GM13976 (cell line): ENCODE measurements at regions of chr3 and their contacts with region 1.

Region 1: DNA sequence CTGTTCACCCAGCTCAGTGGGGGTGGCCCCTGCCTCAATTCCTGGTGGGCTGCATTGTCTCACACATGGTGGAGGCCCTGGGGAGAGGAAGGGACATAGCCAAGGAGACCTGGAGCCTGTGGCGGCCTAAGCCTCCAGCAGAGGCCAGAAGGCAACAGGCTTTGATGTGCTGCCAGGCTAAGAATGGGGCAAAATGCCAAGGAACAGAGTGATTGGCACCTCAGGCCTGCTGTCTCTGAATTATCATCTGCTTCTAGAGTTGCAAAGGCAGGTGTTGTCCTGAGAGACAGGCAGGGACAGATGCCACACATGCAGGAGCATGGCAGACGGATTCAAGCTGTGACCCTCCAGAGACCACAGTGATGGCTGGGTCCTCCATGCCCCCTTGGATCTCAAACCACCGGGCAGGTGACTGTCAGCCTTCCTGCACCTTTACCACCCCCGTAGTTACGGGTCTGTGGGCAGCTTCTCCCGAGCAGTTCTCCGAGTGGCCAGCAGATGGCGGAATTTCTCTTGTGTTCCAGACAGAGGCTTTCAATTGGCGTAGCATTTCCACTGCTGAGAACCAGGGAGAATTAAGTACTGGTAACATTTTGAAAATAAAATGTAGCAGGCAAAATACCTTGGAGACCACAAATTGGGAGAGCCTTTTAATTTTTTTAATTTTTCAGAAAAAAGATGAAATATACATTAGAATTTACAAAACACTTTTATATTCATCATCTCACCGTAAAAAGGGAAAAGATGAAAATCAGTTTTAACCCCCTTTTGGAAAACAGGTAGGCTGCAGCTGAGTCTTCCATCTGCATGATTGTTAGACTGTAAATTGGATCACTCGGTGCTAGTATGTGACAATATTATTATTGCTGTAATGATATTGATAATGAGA is 525.5 kb upstream of the CFAP20DC start:
- DNase-seq: peak; percentile 79
- CTCF ChIP-seq: peak; percentile 91

Region 2: DNA sequence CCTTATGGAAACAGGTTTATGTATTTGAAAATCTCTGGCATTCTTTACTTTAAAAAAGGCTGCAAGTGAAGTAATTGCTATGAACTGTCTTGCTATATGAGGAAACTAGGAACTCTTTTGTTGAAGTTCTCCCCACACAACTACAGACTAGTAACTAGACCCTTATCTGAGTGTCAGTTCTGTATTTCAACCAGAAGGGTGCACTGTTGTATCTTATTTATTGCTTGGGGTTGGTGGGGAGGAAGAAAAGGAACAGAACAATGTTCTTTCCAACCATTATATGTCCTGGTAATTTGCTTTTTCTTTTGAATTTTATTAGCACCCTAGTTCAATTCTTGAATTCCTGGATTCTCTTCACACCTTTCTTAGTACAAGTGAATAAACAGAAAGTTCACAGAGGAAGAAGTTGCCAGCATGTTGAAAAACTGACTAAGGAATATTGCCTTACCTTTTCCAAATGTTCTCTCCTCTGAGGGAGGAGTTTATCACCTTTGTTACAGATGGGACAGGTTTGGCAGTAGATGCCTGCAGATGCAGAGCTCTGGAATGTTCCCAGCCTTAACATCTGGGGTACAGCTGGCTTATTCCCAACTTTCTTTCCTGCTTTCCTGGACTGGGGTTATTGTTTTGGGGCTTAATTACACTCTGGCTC is 363.1 kb before region 1 on chr3:
- in situ Hi-C with region 1: loop called (anchors 10 kb)
- DNase-seq: peak; percentile 53
- CTCF ChIP-seq: peak; percentile 43

Region 3: DNA sequence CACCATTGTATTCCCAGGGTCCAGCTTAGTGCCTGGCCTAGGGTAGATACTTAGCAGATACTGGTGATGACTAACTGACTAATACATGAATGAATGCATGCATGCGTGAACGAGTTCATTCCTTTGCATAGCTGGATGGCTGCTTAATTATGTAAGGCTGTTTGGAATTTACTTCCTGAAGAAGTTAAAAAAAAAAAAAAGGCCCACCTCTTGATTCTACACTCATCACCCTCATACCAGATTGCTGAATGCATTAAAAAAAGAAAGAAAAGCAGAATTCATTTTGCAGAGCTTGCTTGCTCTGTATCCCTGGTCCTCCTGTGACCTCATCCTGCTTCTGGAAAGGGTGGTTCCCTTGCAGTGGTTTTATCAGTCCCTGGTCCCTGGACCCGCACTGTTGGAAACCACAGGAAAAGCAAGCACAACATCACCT is 248.0 kb before region 1 on chr3:
- in situ Hi-C with region 1: no loop called
- DNase-seq: no peak
- CTCF ChIP-seq: no peak

Region 4: GRCh38 chr3:59857589-59858346 is 282.4 kb after region 1 on chr3:
- in situ Hi-C with region 1: loop called (anchors 25 kb)
- DNase-seq: peak; percentile 68
- CTCF ChIP-seq: peak; percentile 87

Region 5: DNA sequence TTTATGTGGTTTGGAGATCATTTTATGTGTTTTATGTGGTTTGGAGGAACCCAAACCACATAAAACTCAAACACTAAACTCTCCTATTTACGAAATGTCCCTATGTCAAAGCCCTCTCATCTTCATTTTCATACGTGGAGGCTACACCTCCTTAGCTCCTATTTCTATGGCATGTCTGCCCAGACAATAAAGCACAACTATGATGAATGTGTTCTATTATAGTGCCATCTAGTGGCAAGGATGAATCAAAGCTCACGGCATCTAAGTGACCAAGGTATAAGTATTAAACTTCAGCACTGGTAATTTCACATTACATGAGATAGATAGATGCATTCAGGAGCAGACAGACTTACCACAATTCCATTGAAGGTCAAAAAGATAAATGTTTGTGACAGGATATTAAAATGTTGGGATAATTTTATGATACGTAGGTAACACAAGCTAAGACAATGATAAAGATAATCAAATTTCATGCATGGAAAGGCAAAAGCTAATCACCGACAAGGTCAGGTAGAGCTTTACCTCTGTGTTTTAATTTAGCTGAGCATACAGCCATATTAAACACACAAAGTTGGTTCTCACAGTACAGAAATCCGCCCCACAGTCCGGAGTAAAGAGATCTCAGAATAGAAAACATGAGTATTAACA is 1806.5 kb after region 1 on chr3:
- in situ Hi-C with region 1: loop called (anchors 25 kb)
- DNase-seq: peak; percentile 65
- CTCF ChIP-seq: peak; percentile 39